Endothelial cell of umbilical vein (primary cell): ENCODE measurements at regions of chr13 and their contacts with region 1.

Region 1: GRCh38 chr13:110138010-110138699 is 168.8 kb downstream of the COL4A1 start:
- DNase-seq: peak; percentile 74
- H3K4me3 ChIP-seq: peak overlapping the region; percentile 10 to 72 (median 45)
- H3K27ac ChIP-seq: peak overlapping the region; percentile 54
- H3K4me1 ChIP-seq: peaks cover 15% of the 10 kb centered on the region
- H3K27me3 ChIP-seq: no peaks in the 10 kb centered on the region
- CTCF ChIP-seq: no peak
- POLR2A ChIP-seq: peak; percentile 26

Region 2: DNA sequence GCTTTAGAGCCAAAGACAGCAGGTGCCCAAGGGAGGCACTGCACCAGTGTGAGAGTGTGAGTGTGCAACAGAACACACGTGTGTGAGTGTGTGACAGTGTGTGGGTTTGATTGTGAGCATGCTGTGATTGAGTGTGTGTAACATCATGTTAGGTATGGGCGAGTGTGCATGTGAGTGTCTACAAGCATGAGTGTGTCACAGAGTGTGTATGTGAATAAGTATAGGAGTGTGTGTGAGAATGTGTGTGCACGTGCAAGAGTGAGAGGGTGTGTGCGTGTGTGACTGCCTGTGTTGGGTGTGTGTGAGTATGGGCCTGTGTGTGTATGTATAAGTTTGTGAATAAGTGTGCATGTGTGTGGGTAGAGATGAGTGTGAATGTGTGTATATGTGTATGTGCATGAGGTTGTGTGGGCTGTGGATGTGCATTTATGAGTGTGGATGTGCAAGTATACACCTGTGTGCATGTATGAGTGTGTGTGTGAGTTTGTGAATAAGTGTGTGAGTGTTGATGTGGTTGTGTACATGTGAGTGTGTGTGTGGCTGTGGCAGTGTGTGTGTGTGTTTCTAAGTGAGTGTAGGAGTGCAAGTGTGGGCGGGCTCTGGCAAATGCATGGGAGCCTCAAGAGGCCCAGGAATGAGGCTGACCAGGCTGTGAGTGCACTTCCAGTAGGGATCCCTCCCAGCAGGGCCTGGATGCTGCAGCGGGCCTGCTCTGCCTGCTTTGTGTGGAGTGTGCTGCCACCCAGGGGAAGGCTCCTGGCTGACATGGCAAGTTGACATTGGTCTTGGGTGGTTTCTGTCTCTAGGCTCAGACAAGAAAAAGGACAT is 29.6 kb before region 1 on chr13:
- CTCF ChIA-PET with region 1: interaction called, 3 read pairs
- POLR2A ChIA-PET with region 1: no interaction called
- dilution Hi-C with region 1: no loop called
- intact Hi-C with region 1: loop called (anchors 1 kb)
- DNase-seq: peak; percentile 46
- H3K4me3 ChIP-seq: no peak overlapping the region
- H3K27ac ChIP-seq: no peak overlapping the region
- H3K4me1 ChIP-seq: no peaks in the 10 kb centered on the region
- H3K27me3 ChIP-seq: peaks cover 0 to 3% of the 10 kb centered on the region in 2 experiments
- CTCF ChIP-seq: peak; percentile 25 to 68
- POLR2A ChIP-seq: no peak

Region 3: GRCh38 chr13:110126391-110126961 is 11.7 kb before region 1 on chr13:
- CTCF ChIA-PET with region 1: interaction called, 8 read pairs
- POLR2A ChIA-PET with region 1: no interaction called
- dilution Hi-C with region 1: no loop called
- intact Hi-C with region 1: loop called (anchors 1 kb)
- DNase-seq: peak; percentile 98
- H3K4me3 ChIP-seq: peak overlapping the region in 1 of 3 experiments; percentile 9
- H3K27ac ChIP-seq: peak overlapping the region; percentile 92
- H3K4me1 ChIP-seq: peaks cover 50% of the 10 kb centered on the region
- H3K27me3 ChIP-seq: no peaks in the 10 kb centered on the region
- CTCF ChIP-seq: no peak
- POLR2A ChIP-seq: peak; percentile 43